Activated naive CD8-positive, alpha-beta T cell treated with anti-CD3 and anti-CD28 coated beads, Interleukin-2, amount 10 ng/mL, durations not matched to agents 7 days and 5 days (primary cell): ENCODE measurements at regions of chr3 and their contacts with region 1.

Region 1: GRCh38 chr3:187139126-187139894 is at the start of gene RPL39L:
- DNase-seq: peak; percentile 98
- ATAC-seq: peak; percentile 94
- H3K4me3 Mint-ChIP-seq: peak within 1 kb of the TSS; percentile 95
- H3K27ac Mint-ChIP-seq: peak within 1 kb of the TSS; percentile 99
- H3K4me1 Mint-ChIP-seq: peaks cover 16% of the 10 kb centered on the region
- H3K27me3 Mint-ChIP-seq: no peaks in the 10 kb centered on the region
- total RNA-seq, gene RPL39L: 18.8 TPM

Region 2: GRCh38 chr3:187112934-187113793 is 26.1 kb before region 1 on chr3:
- POLR2A ChIA-PET with region 1: interaction called, 15 read pairs
- DNase-seq: no peak
- ATAC-seq: peak; percentile 22
- H3K4me3 Mint-ChIP-seq: peak overlapping the region; percentile 14
- H3K27ac Mint-ChIP-seq: no peak overlapping the region
- H3K4me1 Mint-ChIP-seq: peaks cover 6% of the 10 kb centered on the region
- H3K27me3 Mint-ChIP-seq: no peaks in the 10 kb centered on the region

Region 3: GRCh38 chr3:187150599-187150998 is 11.3 kb after region 1 on chr3:
- POLR2A ChIA-PET with region 1: interaction called, 15 read pairs
- DNase-seq: peak; percentile 63
- ATAC-seq: peak; percentile 81
- H3K4me3 Mint-ChIP-seq: no peak overlapping the region
- H3K27ac Mint-ChIP-seq: no peak overlapping the region
- H3K4me1 Mint-ChIP-seq: peaks cover 7% of the 10 kb centered on the region
- H3K27me3 Mint-ChIP-seq: peaks cover 37% of the 10 kb centered on the region